Activated T-helper 2 cell treated with anti-CD3 and anti-CD28 coated beads, Interferon-gamma antibody, Interleukin-2, Interleukin-4, amounts not matched to agents 10 μg/mL and 5 μg/mL and 100 μg/mL, durations not matched to agents 14 hours and 24 hours and 36 hours (primary cell): ENCODE measurements at regions of chr20 and their contacts with region 1.

Region 1: DNA sequence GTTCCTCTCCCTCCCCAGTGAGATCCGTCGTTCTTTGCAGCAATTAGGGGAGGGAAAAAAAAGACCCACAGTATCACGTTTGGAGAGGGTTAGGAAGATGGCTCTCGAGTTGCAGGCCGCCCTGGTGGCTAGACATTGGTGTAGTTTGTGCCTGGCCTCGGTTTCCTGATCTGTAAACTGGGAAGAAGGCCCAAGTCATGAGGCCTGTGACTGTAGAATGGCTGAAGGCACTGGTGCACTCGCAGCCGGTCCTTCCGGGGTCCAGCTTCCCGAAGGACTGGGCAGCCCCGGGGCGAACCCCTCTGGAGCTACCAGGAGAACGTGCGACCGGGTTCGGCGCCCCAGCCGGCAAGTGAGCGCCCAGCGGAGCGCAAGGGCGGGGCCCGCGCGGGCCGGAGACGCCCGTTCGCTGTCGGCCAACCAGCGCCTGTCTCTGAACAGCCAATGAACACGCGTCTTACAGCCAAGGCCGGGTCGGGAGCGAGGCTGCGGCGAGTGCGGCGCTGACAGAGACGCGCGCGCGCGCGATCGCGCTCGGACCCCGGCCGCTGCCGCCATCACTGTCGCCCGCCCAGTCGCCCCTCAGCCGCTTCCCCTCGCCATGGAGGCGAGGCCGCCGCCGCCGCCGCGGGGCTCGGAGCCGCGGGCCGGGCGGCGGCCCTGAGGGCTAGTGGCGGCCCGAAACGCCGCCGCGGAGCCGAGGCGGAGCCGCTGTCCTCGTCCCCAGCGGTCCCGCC is at the start of gene PTPRA:
- DNase-seq: peak; percentile 90
- H3K4me3 Mint-ChIP-seq: peak within 1 kb of the TSS; percentile 88
- H3K27ac Mint-ChIP-seq: peak within 1 kb of the TSS; percentile 94
- H3K4me1 Mint-ChIP-seq: peaks cover 45% of the 10 kb centered on the region
- H3K27me3 Mint-ChIP-seq: no peaks in the 10 kb centered on the region
- total RNA-seq, gene PTPRA: 92.0 TPM in 2 replicates

Region 2: DNA sequence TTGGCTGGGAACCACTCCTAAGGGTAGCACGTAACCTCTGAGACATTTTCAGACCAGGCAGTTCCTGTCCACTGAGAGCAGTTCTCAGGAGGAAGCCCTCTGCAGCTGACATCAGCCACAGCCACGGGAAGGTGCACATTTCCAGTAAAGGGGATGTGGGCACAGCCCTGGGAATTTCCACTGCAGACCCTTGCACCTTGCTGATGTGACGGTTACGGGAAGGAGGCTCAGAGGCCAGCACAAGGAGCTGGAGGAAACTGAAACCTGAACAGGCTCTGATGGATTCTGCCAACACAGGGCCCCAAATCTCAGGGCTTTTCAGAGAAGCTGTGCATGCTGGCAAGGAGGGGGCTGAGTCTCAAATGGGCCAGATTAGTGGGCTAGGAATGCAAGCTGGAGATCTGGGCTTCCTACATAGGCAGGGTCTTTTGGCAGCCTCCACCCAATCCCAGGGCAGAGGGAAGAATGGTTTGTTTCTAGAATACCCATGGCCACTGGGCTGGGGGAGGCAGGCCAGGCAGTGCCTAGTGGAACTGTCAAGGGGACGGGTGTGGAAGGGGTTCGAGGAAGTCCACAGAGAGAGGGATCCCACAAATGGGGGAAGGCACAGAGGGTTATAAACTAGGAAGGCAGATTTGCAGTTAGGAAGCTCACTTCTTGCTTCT is 166.4 kb before region 1 on chr20:
- intact Hi-C with region 1: no loop called
- DNase-seq: no peak
- H3K4me3 Mint-ChIP-seq: no peak overlapping the region
- H3K27ac Mint-ChIP-seq: no peak overlapping the region
- H3K4me1 Mint-ChIP-seq: peaks cover 5% of the 10 kb centered on the region
- H3K27me3 Mint-ChIP-seq: no peaks in the 10 kb centered on the region

Region 3: DNA sequence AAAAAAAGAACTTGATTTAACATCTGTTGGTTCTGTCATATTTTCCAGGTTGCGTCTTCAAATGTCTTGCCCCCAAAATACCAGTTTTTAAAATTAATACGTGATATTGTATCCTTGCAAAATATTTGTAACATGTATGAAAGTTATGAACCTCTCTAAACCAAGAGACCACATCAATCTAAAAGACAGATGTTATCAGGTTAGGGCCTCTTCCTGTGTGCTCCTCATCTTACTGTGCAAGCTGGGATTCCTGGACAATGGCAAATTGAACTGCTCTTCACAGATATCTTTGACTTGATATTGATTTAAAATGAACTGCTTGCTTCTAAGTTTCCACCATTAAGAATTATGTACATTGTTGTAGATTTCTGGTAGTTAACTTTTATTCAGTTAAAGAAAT is 47.4 kb before region 1 on chr20:
- intact Hi-C with region 1: no loop called
- DNase-seq: no peak
- H3K4me3 Mint-ChIP-seq: peak overlapping the region; percentile 52
- H3K27ac Mint-ChIP-seq: no peak overlapping the region
- H3K4me1 Mint-ChIP-seq: peaks cover 21% of the 10 kb centered on the region
- H3K27me3 Mint-ChIP-seq: peaks cover 44% of the 10 kb centered on the region

Region 4: GRCh38 chr20:2840138-2840966 is 32.8 kb before region 1 on chr20 and contains the starts of genes PCED1A and VPS16:
- intact Hi-C with region 1: loop called (anchors 1 kb)
- DNase-seq: peak; percentile 85
- H3K4me3 Mint-ChIP-seq: peak within 1 kb of the TSS; percentile 87
- H3K27ac Mint-ChIP-seq: peak within 1 kb of the TSS; percentile 89
- H3K4me1 Mint-ChIP-seq: peaks cover 19% of the 10 kb centered on the region
- H3K27me3 Mint-ChIP-seq: no peaks in the 10 kb centered on the region
- total RNA-seq, gene PCED1A: 29.2 and 35.2 TPM in 2 replicates
- total RNA-seq, gene VPS16: 47.4 and 50.1 TPM in 2 replicates

Region 5: DNA sequence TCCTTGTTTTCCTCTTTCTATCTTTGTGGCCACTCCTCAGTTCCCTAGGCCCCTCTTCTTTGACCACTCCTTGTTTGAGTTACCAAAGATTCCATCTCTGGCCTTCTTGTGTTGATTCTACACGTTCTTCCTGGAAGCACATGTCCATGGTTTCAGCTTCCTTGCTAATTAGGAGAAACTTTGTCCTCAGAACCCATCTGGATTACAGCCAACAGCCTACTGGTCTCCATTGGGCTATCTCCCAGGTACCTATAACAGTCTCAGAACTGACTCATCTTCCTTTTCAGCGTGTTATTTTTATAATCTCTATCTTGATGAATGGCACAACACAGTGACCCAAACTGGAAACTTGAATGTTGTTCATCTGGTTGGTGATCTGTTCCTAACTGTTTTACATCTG is 17.6 kb after region 1 on chr20:
- intact Hi-C with region 1: no loop called
- DNase-seq: no peak
- H3K4me3 Mint-ChIP-seq: no peak overlapping the region
- H3K27ac Mint-ChIP-seq: peak overlapping the region; percentile 15
- H3K4me1 Mint-ChIP-seq: peaks cover 32% of the 10 kb centered on the region
- H3K27me3 Mint-ChIP-seq: no peaks in the 10 kb centered on the region

Region 6: DNA sequence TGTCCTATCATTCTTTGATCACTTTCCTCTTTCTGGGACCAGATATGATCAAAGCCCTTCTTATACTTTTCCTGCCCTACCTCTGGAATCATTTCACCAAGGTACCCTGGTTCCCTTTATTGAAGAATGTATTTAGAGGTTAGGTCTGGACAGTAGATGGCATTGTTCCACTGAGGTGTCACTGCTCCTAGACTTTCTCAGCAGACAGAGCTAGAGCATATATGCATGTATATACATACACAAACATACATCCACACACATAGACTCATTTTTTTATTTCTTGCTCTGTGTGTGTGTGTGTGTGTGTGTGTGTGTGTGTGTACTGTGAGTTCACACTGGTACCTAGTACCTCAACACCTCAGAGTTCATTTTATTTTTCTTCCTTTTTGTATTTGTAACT is 41.0 kb after region 1 on chr20:
- intact Hi-C with region 1: loop called (anchors 1 kb)
- DNase-seq: no peak
- H3K4me3 Mint-ChIP-seq: no peak overlapping the region
- H3K27ac Mint-ChIP-seq: no peak overlapping the region
- H3K4me1 Mint-ChIP-seq: peaks cover 11% of the 10 kb centered on the region
- H3K27me3 Mint-ChIP-seq: no peaks in the 10 kb centered on the region

Region 7: GRCh38 chr20:3045816-3046676 is 172.9 kb after region 1 on chr20 and contains the start of gene MRPS26:
- intact Hi-C with region 1: loop called (anchors 2 kb)
- DNase-seq: peak; percentile 81
- H3K4me3 Mint-ChIP-seq: peak within 1 kb of the TSS; percentile 86
- H3K27ac Mint-ChIP-seq: peak within 1 kb of the TSS; percentile 81
- H3K4me1 Mint-ChIP-seq: peaks cover 13% of the 10 kb centered on the region
- H3K27me3 Mint-ChIP-seq: no peaks in the 10 kb centered on the region
- total RNA-seq, gene MRPS26: 143 and 148 TPM in 2 replicates